Calu3 (cell line): ENCODE measurements at regions of chr12 and their contacts with region 1.

Region 1: GRCh38 chr12:77685112-77685511 is 145.6 kb upstream of the NAV3 start:
- DNase-seq: peak; percentile 66
- H3K4me3 Mint-ChIP-seq: no peak overlapping the region
- H3K27ac Mint-ChIP-seq: no peak overlapping the region
- H3K4me1 Mint-ChIP-seq: no peaks in the 10 kb centered on the region
- H3K27me3 Mint-ChIP-seq: no peaks in the 10 kb centered on the region
- CTCF ChIP-seq: peak; percentile 45

Region 2: DNA sequence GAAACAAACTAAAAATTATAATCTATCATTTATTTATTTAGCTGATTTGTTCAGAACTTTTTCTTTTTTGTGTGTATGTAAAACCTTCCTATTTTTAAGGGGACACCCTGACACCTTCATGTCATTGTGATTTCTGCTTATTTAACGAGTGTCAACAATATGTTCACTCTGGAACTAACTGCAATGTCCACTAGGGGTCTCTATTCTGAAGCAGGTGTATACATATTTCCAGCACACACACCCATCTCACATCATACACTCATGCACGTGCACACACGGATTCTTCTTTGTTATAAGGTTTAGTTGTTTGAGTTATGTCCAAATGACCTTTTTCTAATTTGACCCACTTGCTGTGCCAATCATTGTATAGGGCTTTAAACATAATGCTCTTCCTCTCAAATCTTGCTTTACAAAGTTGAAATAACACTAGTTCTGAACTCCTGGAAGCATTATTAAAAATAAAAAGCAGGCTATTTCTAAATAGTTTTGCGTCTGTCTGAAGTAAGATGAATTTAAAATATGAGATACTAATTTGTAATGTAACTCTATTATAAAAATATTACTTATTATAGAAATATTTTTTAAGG is 635.3 kb before region 1 on chr12:
- CTCF ChIA-PET with region 1: no interaction called
- intact Hi-C with region 1: loop called (anchors 1 kb)
- DNase-seq: peak; percentile 55
- H3K4me3 Mint-ChIP-seq: no peak overlapping the region
- H3K27ac Mint-ChIP-seq: peak overlapping the region; percentile 65
- H3K4me1 Mint-ChIP-seq: peaks cover 31% of the 10 kb centered on the region
- H3K27me3 Mint-ChIP-seq: no peaks in the 10 kb centered on the region
- CTCF ChIP-seq: peak; percentile 69

Region 3: GRCh38 chr12:77152623-77153193 is 532.4 kb before region 1 on chr12:
- CTCF ChIA-PET with region 1: interaction called, 13 read pairs
- intact Hi-C with region 1: loop called (anchors 1 kb)
- DNase-seq: peak; percentile 12
- H3K4me3 Mint-ChIP-seq: no peak overlapping the region
- H3K27ac Mint-ChIP-seq: no peak overlapping the region
- H3K4me1 Mint-ChIP-seq: no peaks in the 10 kb centered on the region
- H3K27me3 Mint-ChIP-seq: no peaks in the 10 kb centered on the region
- CTCF ChIP-seq: peak; percentile 64

Region 4: GRCh38 chr12:77324763-77325468 is 360.2 kb before region 1 on chr12:
- CTCF ChIA-PET with region 1: no interaction called
- intact Hi-C with region 1: loop called (anchors 2 kb)
- DNase-seq: peak; percentile 82
- H3K4me3 Mint-ChIP-seq: peak overlapping the region; percentile 87
- H3K27ac Mint-ChIP-seq: peak overlapping the region; percentile 45
- H3K4me1 Mint-ChIP-seq: peaks cover 9% of the 10 kb centered on the region
- H3K27me3 Mint-ChIP-seq: peaks cover 27% of the 10 kb centered on the region
- CTCF ChIP-seq: peak; percentile 14

Region 5: DNA sequence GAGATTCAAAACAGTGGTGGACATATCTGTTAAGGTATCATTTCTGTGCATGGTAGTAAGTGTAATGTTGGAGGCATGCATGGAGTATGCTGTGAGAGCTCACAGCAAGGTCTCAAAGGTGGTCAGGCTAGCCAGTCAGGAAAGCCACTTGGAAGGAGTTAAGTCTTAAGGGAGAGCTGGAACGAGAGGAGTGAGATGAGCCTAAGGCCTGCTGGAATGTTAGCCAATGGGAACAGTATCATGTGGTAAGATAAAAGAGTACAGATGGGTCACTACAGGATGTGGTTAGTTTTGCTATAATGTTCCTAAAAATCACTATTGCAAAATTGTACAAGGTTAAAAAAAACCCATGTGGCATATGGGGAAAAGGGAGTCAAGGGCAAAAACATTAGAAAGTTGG is 308.0 kb before region 1 on chr12:
- CTCF ChIA-PET with region 1: no interaction called
- intact Hi-C with region 1: loop called (anchors 10 kb)
- DNase-seq: no peak
- H3K4me3 Mint-ChIP-seq: no peak overlapping the region
- H3K27ac Mint-ChIP-seq: no peak overlapping the region
- H3K4me1 Mint-ChIP-seq: peaks cover 7% of the 10 kb centered on the region
- H3K27me3 Mint-ChIP-seq: no peaks in the 10 kb centered on the region
- CTCF ChIP-seq: no peak

Region 6: DNA sequence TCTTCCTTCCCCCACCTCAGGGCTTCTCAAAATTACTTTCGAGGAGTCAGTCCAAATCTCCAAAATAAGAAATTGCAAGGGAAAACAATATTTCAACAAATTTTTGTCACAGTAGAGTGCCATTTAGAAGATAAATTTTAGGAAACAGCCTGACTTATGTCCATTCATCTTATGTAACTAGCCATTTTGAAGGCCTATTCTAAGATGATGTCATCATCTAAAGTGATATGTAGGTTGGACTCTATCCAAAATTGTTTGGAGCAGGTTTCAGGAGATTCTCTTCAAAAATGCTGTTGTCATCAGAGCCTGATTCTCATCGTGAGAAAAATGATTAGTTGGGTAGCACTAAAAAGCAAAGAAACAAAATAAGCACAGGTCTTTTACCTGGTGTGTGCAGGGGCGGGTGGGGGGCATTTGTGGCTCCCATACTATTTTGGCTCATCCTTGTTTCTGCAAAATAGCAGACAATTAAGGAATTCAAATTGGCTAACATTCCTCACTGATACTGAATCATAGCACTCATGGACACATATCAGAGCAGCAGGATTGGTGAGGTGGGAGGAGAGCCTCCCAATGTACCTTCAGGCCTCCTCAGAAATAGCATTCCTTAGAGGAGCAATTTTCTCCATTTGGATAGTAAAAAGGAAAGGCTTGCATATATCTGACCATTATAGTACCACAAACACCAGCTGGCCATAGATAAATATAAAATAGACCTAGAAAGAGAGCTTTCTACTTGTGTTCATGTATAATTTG is 215.4 kb before region 1 on chr12:
- CTCF ChIA-PET with region 1: no interaction called
- intact Hi-C with region 1: loop called (anchors 10 kb)
- DNase-seq: no peak
- H3K4me3 Mint-ChIP-seq: no peak overlapping the region
- H3K27ac Mint-ChIP-seq: no peak overlapping the region
- H3K4me1 Mint-ChIP-seq: no peaks in the 10 kb centered on the region
- H3K27me3 Mint-ChIP-seq: no peaks in the 10 kb centered on the region
- CTCF ChIP-seq: no peak

Region 7: DNA sequence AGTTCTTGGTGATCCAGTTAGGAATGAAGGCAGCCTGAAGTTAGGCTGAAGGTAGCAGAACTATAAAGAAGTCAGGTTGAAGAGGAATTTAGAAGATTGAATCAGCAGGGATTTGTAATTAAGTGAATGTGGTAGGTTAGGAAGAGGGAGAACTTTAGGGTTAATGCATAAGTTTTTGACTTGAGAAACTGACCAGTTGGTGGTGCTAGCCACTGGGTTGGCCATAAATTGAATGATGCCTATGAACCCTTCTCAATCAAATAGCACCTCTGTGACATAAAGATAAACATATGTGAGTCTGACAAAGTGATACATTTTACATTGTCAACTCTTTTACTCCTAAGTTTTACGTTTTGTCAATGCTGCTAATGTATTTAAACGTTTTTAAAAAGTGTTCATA is 145.0 kb before region 1 on chr12:
- CTCF ChIA-PET with region 1: no interaction called
- intact Hi-C with region 1: loop called (anchors 1 kb)
- DNase-seq: no peak
- H3K4me3 Mint-ChIP-seq: no peak overlapping the region
- H3K27ac Mint-ChIP-seq: no peak overlapping the region
- H3K4me1 Mint-ChIP-seq: no peaks in the 10 kb centered on the region
- H3K27me3 Mint-ChIP-seq: no peaks in the 10 kb centered on the region
- CTCF ChIP-seq: no peak

Region 8: DNA sequence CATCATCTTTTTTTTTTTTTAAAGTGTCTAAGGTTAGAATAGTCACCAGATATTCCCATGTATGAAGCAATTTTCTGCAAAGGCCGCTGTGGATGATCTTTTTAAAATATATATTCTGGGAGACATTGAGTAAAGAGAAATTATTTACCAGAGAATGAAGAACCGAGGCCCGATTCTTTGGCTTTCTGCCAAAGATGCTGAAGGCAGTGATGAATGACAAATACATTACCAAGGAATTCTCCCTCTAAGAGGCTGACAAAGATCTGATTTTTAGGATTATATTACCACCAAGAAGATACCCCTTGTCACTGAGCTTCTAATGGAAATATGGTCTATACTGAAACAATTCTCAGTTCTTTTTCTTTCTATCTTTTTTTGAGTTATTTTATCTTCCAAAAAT is 482.4 kb after region 1 on chr12:
- CTCF ChIA-PET with region 1: no interaction called
- intact Hi-C with region 1: no loop called
- DNase-seq: no peak
- H3K4me3 Mint-ChIP-seq: no peak overlapping the region
- H3K27ac Mint-ChIP-seq: no peak overlapping the region
- H3K4me1 Mint-ChIP-seq: no peaks in the 10 kb centered on the region
- H3K27me3 Mint-ChIP-seq: no peaks in the 10 kb centered on the region
- CTCF ChIP-seq: no peak